ENCODE measurements at regions of chr7 and their contacts with region 1.

Region 1: DNA sequence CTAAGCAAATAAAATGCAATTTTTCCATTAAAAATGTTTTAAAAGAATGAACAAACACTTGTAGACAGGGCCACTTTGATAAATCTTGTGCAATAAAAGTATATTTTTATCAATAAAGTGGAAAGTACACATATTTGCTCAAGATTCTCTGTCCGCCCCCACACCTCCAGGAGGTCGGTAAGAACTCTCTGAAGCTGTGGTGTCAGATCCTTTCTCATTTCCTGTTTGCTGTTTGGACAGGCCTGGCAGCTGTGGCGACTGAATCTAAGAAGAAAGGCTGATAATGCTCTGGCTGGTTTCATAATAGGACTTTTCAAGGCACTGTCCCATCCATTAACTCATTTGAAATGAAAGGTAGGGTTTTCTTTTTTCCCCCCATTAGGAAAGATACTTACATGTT is 15.3 kb upstream of the ASB4 start:
- DNase-seq: no peak
- ATAC-seq: no peak

Region 2: DNA sequence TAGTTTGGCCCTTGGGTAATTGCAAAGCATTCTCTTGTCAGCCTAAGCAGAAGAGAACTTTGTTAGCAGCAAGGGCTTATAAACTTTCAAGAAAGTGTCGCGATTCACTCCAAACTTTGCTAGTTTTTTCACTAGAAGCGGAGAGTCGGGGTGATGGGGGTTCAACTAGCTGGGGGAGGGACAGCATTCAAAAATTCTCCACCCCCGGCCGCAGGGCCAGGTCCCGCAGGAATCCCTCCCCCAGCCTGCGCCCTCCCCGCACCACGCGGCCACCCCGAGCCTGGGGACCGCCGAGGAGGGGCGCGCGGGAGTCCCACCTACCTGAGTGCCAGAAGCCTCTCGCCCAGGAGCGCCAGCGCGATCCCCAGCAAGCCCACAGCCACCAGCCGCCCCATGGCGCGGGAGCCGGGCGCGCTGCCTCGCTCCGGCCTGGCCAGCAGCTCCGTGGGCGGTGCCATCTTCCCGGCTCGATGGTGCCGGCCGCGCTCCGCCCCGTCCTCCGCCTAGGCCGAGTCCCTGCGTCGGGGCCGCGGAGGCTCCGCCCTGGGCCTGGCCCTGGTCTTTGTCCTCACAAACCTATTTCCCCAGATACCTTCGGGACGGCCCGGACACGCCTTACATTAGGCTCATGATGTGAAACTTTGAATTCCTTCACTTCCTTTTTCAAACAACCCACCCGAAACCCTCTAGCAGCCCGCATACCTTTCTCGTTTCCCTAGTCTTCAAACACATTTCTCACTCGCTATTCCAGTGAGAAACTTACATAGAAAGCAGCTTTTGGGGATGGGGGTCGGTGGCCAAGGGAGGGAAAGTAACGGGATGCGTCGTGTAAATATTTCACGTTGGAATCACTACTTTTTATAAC is 35.7 kb before region 1 on chr7 and contains the start of gene PON2:
- intact Hi-C with region 1: loop called (anchors 5 kb)
- DNase-seq: peak; percentile 91
- ATAC-seq: peak; percentile 99
- total RNA-seq, gene PON2: 37.4 TPM